Heart left ventricle (tissue), 16 donors: ENCODE measurements at regions of chr14 and their contacts with region 1.

Region 1: DNA sequence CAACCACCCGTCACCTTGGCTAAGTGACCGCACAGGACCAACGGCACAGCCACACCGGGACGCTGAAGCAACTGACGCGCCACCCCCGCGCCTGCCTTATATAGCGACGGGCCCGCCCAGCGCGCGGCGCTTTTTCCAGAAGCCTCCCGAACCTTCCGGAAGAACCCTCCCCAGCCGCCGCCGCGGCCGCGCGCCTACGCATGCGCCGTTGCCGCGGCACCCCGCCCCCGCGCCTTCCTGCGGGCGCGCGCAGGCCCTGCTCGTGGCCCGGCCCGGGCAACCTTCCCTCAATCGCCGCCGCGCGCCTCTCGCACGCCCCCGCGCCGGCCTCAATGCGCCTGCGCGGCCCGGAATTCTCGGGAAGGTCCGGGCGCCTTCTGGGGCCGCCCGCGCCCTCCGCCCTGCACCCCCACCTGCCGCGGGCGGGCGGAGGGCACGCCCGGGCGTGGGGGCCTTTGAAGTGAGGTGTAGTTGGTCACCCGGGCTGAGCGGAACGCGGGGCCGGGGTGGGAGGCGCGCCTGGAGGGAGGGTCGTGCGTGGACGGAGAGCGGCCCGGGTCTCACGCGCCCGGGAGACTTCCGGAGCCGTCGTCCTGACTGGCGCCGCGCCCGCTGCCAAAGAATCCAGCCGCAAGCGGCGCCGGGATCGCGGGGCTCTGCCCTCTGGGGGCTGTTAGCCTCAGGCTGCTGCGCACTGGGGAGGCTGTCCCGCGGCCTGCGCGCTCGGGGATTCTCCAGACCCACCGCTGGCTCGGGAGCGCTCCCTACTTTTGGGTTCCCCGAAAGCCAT is at the start of gene HSP90AA1:
- DNase-seq: peak; percentile 94 to 97 (median 96)
- ATAC-seq: peak; percentile 71 to 93 (median 86)
- H3K4me3 ChIP-seq: peak within 1 kb of the TSS; percentile 73 to 99 (median 92)
- H3K27ac ChIP-seq: peak within 1 kb of the TSS; percentile 98 to 100 (median 100)
- H3K4me1 ChIP-seq: peaks cover 14 to 53% (median 39%) of the 10 kb centered on the region in 12 donors
- H3K27me3 ChIP-seq: no peaks in the 10 kb centered on the region
- CTCF ChIP-seq: peak in 5 of 12 donors; percentile 13 to 54 (median 36)
- POLR2A ChIP-seq: peak; percentile 61 to 97
- total RNA-seq, gene HSP90AA1: 351 to 854 (median 427) TPM

Region 2: GRCh38 chr14:101997429-101998336 is 89.5 kb before region 1 on chr14:
- intact Hi-C with region 1: no loop called
- DNase-seq: no peak
- ATAC-seq: no peak
- H3K4me3 ChIP-seq: no peak overlapping the region
- H3K27ac ChIP-seq: no peak overlapping the region
- H3K4me1 ChIP-seq: peaks cover 0 to 3% (median 0%) of the 10 kb centered on the region in 12 donors
- H3K27me3 ChIP-seq: no peaks in the 10 kb centered on the region
- CTCF ChIP-seq: no peak
- POLR2A ChIP-seq: no peak

Region 3: DNA sequence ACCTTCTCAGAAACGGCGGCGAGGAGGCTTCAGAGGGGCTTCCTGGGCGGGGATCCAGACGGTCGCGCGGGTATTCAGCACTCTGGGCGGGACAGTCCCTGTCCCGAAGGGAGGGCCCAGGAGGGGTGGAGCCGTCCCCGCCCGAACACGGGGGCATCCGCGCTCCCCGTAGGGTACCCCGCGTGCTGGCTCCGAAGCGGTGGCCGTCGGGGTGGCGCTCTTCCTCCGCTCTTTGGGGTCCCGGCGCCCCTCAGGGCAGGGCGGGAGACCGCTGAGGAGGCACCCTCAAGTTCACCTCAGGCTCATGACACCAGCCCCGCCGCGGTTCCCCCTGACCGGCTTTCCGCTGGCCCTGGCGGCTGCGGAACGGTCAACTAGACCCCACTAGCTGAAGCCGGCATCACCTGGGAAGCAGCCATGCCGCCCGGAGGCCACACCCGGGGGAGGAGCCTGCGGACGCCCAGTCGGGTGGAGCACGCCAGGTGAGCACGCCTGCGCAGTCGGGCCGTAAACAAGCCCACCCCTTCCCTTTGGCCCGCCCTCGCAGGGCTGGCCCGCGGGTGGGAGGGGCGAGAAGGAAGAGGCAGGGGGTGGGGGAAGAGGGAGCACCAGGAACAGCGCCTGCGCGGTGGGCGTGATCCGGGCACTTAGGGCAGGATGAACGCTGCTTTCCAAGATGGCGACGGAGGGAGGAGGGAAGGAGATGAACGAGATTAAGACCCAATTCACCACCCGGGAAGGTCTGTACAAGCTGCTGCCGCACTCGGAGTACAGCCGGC is 52.3 kb after region 1 on chr14 and contains the start of gene WDR20:
- intact Hi-C with region 1: loop called in 1 of 10 experiments (anchors 5 kb)
- DNase-seq: peak; percentile 98 to 99 (median 99)
- ATAC-seq: peak; percentile 99 to 100 (median 100)
- H3K4me3 ChIP-seq: peak within 1 kb of the TSS; percentile 74 to 100 (median 96)
- H3K27ac ChIP-seq: peak within 1 kb of the TSS; percentile 30 to 92 (median 86)
- H3K4me1 ChIP-seq: peaks cover 0 to 35% (median 22%) of the 10 kb centered on the region in 12 donors
- H3K27me3 ChIP-seq: no peaks in the 10 kb centered on the region
- CTCF ChIP-seq: no peak
- POLR2A ChIP-seq: peak in 1 of 2 donors; percentile 49
- total RNA-seq, gene WDR20: 15.8 to 26.5 (median 21.2) TPM

Region 4: DNA sequence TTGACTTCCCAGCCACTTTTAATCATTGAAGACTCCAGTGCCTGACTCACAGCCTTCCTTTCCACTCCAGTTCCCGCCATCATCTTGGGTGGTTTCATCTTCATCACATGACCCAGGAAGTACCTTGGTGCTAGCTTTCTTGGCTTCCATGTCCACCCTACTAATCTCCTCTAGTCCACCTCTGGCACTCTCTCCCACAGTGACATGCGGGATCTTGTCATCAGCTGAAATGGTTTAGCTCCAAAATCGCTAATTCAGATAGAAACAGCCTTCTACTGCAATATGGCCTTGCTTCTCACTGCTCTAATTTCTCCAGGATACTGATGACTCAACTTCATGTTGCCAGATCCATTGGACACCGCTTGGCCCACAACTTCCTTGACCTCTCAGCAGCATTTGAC is 77.1 kb after region 1 on chr14:
- intact Hi-C with region 1: no loop called
- DNase-seq: no peak
- ATAC-seq: peak in 3 of 4 donors; percentile 63 to 67 (median 66)
- H3K4me3 ChIP-seq: no peak overlapping the region
- H3K27ac ChIP-seq: no peak overlapping the region
- H3K4me1 ChIP-seq: peaks cover 0 to 58% (median 26%) of the 10 kb centered on the region in 12 donors
- H3K27me3 ChIP-seq: no peaks in the 10 kb centered on the region
- CTCF ChIP-seq: no peak
- POLR2A ChIP-seq: no peak

Region 5: GRCh38 chr14:102215071-102215470 is 127.9 kb after region 1 on chr14:
- intact Hi-C with region 1: loop called in 2 of 10 experiments (anchors 10 kb)
- DNase-seq: peak in 4 of 5 donors; percentile 44 to 55 (median 52)
- ATAC-seq: peak; percentile 64 to 80 (median 76)
- H3K4me3 ChIP-seq: no peak overlapping the region
- H3K27ac ChIP-seq: peak overlapping the region; percentile 7 to 78 (median 54)
- H3K4me1 ChIP-seq: peaks cover 0 to 52% (median 27%) of the 10 kb centered on the region in 12 donors
- H3K27me3 ChIP-seq: no peaks in the 10 kb centered on the region
- CTCF ChIP-seq: no peak
- POLR2A ChIP-seq: no peak